CD4-positive, alpha-beta memory T cell (primary cell): ENCODE measurements at regions of chr19 and their contacts with region 1.

Region 1: GRCh38 chr19:4791170-4792018 is at the start of gene FEM1A:
- DNase-seq: peak; percentile 97 to 100 (median 100)
- H3K4me3 ChIP-seq: peak within 1 kb of the TSS in 1 of 2 donors; percentile 74
- H3K4me3 Mint-ChIP-seq: peak within 1 kb of the TSS; percentile 83 to 90 (median 84)
- H3K27ac ChIP-seq: peak within 1 kb of the TSS; percentile 89
- H3K27ac Mint-ChIP-seq: peak within 1 kb of the TSS; percentile 82 to 95 (median 92)
- H3K4me1 ChIP-seq: peaks cover 36% of the 10 kb centered on the region
- H3K4me1 Mint-ChIP-seq: peaks cover 8 to 40% (median 22%) of the 10 kb centered on the region in 4 donors
- H3K27me3 ChIP-seq: no peaks in the 10 kb centered on the region
- H3K27me3 Mint-ChIP-seq: no peaks in the 10 kb centered on the region
- total RNA-seq, gene FEM1A: 16.7 TPM

Region 2: DNA sequence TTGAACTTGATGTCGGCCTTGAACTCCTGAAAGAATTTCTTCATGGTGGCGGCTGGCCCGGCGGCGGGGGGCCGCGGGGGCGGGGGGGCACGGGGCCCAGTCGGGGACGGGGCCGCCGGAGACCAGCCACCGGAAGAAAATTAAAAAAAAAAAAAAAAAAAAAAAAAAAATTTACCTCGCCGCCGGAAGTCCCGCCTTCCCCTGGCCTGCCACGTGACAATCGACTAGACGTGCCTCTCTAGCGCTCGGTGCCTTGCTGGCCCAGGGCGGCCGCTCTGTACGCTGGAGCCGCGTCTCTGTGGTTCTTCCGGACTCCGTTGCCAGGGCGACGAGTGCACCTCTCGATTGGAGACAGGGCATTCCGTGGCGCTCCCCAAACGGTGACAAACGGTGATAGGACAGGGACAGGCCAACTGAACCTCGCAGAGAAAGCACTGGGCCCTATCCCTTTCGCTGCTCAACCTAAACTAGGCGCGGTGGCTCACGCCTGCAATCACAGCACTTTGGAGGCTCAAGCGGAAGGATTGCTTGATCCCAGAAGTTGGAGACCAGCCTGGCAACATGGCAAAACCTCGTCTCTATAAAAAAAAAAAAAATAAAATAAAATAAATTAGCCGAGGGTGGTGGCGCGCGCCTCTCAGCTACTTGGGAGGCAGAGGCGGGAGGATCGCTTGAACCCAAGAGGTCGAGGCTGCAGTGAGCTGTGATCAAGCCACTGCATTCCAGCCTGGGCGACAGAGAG is 333.6 kb before region 1 on chr19 and contains the start of gene UBXN6:
- CTCF ChIA-PET with region 1: no interaction called
- POLR2A ChIA-PET with region 1: no interaction called
- intact Hi-C with region 1: no loop called
- DNase-seq: peak; percentile 97 to 99 (median 98)
- H3K4me3 ChIP-seq: peak within 1 kb of the TSS; percentile 42 to 52
- H3K4me3 Mint-ChIP-seq: peak within 1 kb of the TSS; percentile 89 to 94 (median 91)
- H3K27ac ChIP-seq: peak within 1 kb of the TSS; percentile 62
- H3K27ac Mint-ChIP-seq: peak within 1 kb of the TSS; percentile 90 to 97 (median 96)
- H3K4me1 ChIP-seq: peaks cover 16% of the 10 kb centered on the region
- H3K4me1 Mint-ChIP-seq: peaks cover 11 to 26% (median 17%) of the 10 kb centered on the region in 4 donors
- H3K27me3 ChIP-seq: no peaks in the 10 kb centered on the region
- H3K27me3 Mint-ChIP-seq: peaks cover 0 to 2% of the 10 kb centered on the region in 2 donors
- total RNA-seq, gene UBXN6: 61.3 to 63.5 TPM

Region 3: DNA sequence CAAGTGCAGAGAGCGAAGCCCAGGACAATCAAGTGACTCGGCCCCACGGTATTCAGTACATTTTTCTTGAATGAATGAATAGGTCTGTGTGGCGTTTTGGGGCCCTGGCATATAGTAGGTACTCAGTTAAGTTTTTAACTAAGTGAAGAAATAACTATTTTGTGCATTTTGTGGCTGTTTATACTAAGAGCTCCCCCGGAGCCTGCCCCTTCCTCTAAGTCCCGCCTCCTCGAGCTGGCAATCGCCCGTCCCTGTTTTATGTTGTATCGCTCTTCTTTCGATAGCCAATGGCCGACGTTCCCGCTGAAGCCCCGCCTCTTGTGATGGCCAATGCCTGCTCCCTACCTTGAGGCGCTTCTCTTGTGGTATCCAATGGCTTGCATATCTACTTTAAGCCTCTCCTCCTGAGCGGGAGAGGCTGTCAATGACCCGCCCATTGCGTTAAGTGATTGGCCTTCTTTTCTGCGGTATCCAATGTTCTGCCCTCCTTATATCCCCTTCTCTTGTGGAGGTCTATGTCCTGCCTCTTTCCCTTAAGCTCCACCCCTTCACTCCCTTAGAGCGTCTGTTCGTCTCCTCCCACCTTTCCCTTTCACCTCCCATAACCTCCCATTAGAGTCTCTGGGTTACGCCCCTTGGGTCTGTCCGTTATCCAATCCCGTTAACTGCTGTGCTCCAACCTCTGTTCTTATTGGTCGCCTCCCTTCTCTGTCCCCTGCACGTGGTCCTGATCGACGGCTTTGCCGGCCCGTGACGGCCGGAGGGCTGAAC is 319.8 kb before region 1 on chr19:
- CTCF ChIA-PET with region 1: interaction called, 3 read pairs
- POLR2A ChIA-PET with region 1: interaction called, 3 read pairs
- intact Hi-C with region 1: loop called (anchors 2 kb)
- DNase-seq: peak; percentile 96 to 100 (median 99)
- H3K4me3 ChIP-seq: peak overlapping the region; percentile 27 to 68
- H3K4me3 Mint-ChIP-seq: no peak overlapping the region
- H3K27ac ChIP-seq: peak overlapping the region; percentile 74
- H3K27ac Mint-ChIP-seq: no peak overlapping the region
- H3K4me1 ChIP-seq: peaks cover 30% of the 10 kb centered on the region
- H3K4me1 Mint-ChIP-seq: peaks cover 9 to 26% (median 16%) of the 10 kb centered on the region in 4 donors
- H3K27me3 ChIP-seq: no peaks in the 10 kb centered on the region
- H3K27me3 Mint-ChIP-seq: no peaks in the 10 kb centered on the region

Region 4: DNA sequence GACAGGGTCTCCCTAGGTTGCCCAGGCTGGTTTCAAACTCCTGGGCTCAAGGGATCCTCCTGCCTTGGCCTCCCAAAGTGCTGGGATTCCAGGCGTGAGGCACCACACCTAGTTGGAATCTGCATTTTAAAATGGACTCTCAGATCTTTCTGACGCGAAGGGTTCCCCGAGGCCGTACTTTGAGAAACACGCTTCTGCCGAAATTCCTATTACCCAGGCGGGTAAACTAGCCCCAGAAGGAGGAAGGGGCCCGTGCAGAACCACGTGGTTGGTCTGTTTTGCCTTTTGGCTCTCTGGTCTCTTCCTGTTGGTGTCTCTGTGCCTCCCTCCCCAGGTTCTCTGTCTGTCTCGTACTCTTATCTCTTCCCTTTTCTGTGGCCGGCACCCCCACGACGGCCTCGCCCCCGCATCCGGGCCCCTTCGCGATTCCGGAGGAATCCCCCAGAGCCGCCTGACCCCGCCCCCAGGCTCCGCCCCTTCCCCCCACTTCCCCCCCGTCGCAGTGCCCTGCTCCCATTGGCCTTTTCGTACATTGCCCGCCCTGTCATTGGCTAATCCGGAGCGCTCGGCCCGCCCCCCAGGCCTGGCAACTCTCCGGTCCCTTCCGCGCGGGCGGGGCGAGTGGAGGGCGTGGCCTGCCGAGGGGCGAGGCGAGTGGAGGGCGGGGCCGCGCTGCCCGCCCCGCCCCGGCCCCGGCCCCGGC is 152.4 kb before region 1 on chr19 and contains the start of gene TNFAIP8L1:
- CTCF ChIA-PET with region 1: interaction called, 6 read pairs
- POLR2A ChIA-PET with region 1: no interaction called
- intact Hi-C with region 1: loop called (anchors 1 kb)
- DNase-seq: peak; percentile 98 to 100 (median 99)
- H3K4me3 ChIP-seq: peak within 1 kb of the TSS; percentile 90 to 94
- H3K4me3 Mint-ChIP-seq: peak within 1 kb of the TSS; percentile 95 to 98 (median 97)
- H3K27ac ChIP-seq: peak within 1 kb of the TSS; percentile 83
- H3K27ac Mint-ChIP-seq: peak within 1 kb of the TSS; percentile 94 to 99 (median 99)
- H3K4me1 ChIP-seq: peaks cover 40% of the 10 kb centered on the region
- H3K4me1 Mint-ChIP-seq: peaks cover 8 to 41% (median 27%) of the 10 kb centered on the region in 4 donors
- H3K27me3 ChIP-seq: no peaks in the 10 kb centered on the region
- H3K27me3 Mint-ChIP-seq: no peaks in the 10 kb centered on the region
- total RNA-seq, gene TNFAIP8L1: 16.2 to 17.2 TPM

Region 5: DNA sequence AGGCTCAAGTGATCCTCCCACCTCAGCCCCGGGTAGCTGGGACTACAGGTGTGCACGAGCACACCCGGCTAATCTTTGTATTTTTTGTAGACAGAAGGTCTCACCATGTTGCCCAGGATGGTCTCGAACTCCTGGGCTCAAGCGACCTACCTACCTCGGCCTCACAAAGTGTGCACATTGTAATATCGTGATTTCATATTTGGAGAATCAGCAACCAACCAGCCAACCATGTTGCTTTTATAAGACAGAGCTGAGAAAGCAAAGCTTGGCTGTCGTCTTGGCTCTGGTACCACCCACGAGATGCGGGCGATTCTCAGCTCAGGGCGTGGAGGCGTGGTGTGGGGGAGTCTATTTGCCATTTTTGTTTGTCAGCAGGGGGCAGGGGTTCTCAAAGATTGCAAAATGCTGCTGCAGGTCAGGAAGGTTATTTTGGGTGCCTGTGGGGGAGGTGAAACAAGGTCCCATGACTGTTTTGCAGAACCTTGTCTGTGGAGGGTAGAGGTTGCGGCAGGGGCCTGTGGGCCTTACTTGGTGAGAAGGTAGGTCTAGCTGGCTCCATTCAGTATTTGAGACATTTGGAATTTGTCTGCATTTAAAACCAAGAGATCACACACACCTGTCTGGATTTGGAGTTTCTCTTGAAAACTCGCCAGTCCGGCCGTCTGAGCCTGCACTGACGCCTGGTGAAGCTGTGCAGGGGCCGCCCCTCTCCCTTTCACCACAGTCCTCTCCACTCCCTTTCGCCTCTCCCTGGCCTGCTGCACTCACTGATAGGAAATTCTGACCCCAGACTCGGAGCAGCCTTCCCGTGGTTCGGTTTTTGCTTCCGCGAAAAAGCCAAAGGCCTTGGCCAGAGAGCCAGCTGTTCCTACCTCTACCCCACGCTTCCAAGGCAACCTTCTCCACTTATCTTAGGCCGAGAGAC is 136.7 kb before region 1 on chr19:
- CTCF ChIA-PET with region 1: no interaction called
- POLR2A ChIA-PET with region 1: no interaction called
- intact Hi-C with region 1: no loop called
- DNase-seq: no peak
- H3K4me3 ChIP-seq: no peak overlapping the region
- H3K4me3 Mint-ChIP-seq: no peak overlapping the region
- H3K27ac ChIP-seq: no peak overlapping the region
- H3K27ac Mint-ChIP-seq: peak overlapping the region in 3 of 7 donors; percentile 37 to 66 (median 51)
- H3K4me1 ChIP-seq: no peaks in the 10 kb centered on the region
- H3K4me1 Mint-ChIP-seq: peaks cover 0 to 3% (median 0%) of the 10 kb centered on the region in 4 donors
- H3K27me3 ChIP-seq: no peaks in the 10 kb centered on the region
- H3K27me3 Mint-ChIP-seq: no peaks in the 10 kb centered on the region

Region 6: GRCh38 chr19:4732680-4733114 is 58.7 kb before region 1 on chr19:
- CTCF ChIA-PET with region 1: interaction called, 162 read pairs
- POLR2A ChIA-PET with region 1: interaction called, 12 read pairs
- intact Hi-C with region 1: loop called (anchors 1 kb)
- DNase-seq: peak; percentile 57 to 66 (median 61)
- H3K4me3 ChIP-seq: no peak overlapping the region
- H3K4me3 Mint-ChIP-seq: peak overlapping the region in 5 of 8 donors; percentile 1 to 34 (median 7)
- H3K27ac ChIP-seq: no peak overlapping the region
- H3K27ac Mint-ChIP-seq: peak overlapping the region in 3 of 7 donors; percentile 5 to 60 (median 52)
- H3K4me1 ChIP-seq: peaks cover 4% of the 10 kb centered on the region
- H3K4me1 Mint-ChIP-seq: peaks cover 6 to 12% (median 7%) of the 10 kb centered on the region in 4 donors
- H3K27me3 ChIP-seq: no peaks in the 10 kb centered on the region
- H3K27me3 Mint-ChIP-seq: peaks cover 2 to 10% of the 10 kb centered on the region in 2 donors

Region 7: DNA sequence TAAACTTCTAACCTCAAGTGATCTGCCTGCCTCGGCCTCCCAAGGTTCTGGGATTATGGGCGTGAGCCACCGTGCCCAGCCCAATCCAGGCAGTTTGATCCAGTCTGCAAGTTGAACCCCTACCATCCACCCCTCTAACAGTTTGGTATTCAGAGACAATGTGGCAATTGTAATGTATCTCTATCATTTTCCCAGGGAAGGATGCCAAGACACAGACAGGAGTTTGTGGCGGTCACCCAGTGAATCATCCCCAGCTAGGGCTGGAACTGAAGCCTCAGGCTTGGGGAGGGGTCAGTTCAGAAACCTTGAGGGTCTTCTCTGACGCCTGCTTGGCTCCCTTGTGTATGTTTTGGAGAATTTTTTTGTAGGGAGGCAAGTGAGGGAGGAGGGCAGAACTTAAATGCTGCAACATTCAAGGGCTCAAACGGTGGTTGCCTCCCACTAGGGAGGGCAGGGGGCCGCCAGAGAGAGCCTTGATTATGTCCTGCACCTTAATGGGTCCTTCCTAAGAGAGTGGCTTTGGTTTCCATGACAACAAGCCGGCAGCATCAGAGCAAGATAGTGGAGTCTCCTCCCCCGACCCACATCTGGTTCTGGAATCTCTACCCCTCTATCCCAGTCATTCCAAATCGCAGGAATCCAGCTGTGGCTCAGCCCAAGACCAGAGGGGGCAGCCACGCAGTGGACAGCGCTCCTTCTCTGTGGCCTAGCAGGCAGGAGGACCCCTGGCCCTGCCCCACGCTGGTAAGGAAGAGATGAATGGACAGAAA is 14.8 kb before region 1 on chr19:
- CTCF ChIA-PET with region 1: interaction called, 10 read pairs
- POLR2A ChIA-PET with region 1: no interaction called
- intact Hi-C with region 1: no loop called
- DNase-seq: no peak
- H3K4me3 ChIP-seq: no peak overlapping the region
- H3K4me3 Mint-ChIP-seq: no peak overlapping the region
- H3K27ac ChIP-seq: no peak overlapping the region
- H3K27ac Mint-ChIP-seq: no peak overlapping the region
- H3K4me1 ChIP-seq: no peaks in the 10 kb centered on the region
- H3K4me1 Mint-ChIP-seq: peaks cover 0 to 3% (median 0%) of the 10 kb centered on the region in 4 donors
- H3K27me3 ChIP-seq: no peaks in the 10 kb centered on the region
- H3K27me3 Mint-ChIP-seq: peaks cover 16 to 24% of the 10 kb centered on the region in 2 donors

Region 8: DNA sequence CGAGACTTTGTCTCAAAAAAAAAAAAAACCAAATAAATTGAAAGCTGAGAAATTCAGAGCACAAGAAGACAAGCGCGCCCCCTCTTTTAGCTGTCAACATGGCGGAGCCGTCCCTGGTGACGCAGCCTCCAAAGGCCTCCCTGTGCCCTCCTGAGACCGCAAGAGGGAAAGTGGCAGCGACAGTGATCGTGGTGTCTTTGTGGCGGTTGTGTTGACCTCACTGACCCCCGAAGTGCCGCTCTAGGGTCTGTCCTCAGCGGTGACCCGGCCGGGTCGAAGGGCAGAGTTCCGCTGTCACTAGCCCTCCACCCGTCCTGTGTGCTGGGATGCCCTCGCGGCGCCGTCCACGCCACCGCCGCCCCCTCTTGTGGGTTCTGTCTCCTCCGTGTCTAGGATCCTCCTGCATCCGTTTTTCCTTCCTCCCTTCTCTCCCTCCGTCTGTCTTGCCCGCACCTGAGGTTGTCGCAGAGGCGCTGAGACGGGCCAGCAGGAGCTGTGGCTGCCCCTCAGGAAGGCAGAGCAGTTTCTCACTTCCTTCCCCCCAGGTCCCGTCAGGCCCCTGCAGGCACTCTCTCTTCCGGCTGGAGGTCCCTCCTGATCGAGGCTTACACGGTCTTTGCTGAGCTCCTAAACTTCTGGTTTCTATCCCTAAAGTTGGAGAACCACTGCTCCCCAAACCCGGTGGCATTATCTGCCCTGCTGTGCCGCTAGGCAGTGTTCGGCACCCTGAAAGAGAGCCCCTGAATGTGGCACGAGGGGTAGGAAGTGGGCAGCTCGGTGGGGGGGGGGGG is 125.1 kb after region 1 on chr19:
- CTCF ChIA-PET with region 1: interaction called, 6 read pairs
- POLR2A ChIA-PET with region 1: interaction called, 10 read pairs
- intact Hi-C with region 1: no loop called
- DNase-seq: peak; percentile 33 to 67 (median 44)
- H3K4me3 ChIP-seq: peak overlapping the region; percentile 55 to 61
- H3K4me3 Mint-ChIP-seq: peak overlapping the region; percentile 94 to 100 (median 100)
- H3K27ac ChIP-seq: peak overlapping the region; percentile 62
- H3K27ac Mint-ChIP-seq: peak overlapping the region; percentile 98 to 100 (median 99)
- H3K4me1 ChIP-seq: peaks cover 58% of the 10 kb centered on the region
- H3K4me1 Mint-ChIP-seq: peaks cover 28 to 57% (median 40%) of the 10 kb centered on the region in 4 donors
- H3K27me3 ChIP-seq: no peaks in the 10 kb centered on the region
- H3K27me3 Mint-ChIP-seq: no peaks in the 10 kb centered on the region